Heart right ventricle (tissue), 16 donors: ENCODE measurements at regions of chr18 and their contacts with region 1.

Region 1: DNA sequence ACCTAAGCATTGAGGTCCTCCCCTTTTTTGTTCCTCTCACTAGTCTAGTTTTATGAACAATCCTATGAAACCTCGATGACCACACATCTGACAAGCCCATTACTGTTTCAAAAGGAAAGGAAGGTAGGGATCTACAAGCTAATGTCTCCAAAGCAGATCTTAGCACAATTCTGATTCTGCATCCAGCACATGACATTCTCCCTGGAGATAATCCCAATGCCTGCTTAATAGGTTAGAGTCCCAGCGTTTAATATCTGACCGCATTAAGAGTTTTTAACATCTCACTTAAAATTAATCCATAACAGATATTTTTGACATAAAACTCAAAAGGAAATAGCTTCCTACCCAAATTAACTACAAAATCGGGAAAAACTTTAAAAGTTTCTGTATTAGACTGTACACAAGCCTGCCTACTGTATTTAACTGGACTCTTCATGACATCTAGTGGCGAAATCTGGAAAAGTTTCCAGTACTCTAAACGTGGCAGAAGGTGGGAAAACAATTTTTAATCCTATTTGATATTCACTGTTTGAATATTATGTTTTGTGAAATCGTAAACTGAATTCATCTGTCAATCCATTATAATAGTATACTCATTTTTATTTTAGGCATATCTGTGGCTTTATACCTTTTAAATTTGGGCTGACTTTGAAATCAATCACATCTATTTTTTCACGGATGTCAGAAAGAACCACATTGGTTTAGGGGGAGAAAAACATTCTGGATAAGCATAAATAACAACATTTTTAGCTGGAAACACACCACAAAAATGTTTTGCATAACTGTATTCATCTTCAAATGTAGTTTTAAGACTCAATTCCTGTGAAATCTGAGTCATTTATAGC is 62.4 kb downstream of the TXNL1 start:
- DNase-seq: peak in 1 of 2 donors; percentile 56
- ATAC-seq: peak; percentile 64 to 96 (median 85)
- H3K4me3 ChIP-seq: peak overlapping the region in 2 of 10 donors; percentile 1 to 22
- H3K27ac ChIP-seq: peak overlapping the region; percentile 48 to 90 (median 70)
- H3K4me1 ChIP-seq: peaks cover 10 to 37% (median 33%) of the 10 kb centered on the region in 9 donors
- H3K27me3 ChIP-seq: no peaks in the 10 kb centered on the region
- CTCF ChIP-seq: peak; percentile 53 to 86 (median 71)

Region 2: GRCh38 chr18:55234366-55235093 is 1341.5 kb before region 1 on chr18:
- intact Hi-C with region 1: loop called in 8 of 10 experiments (anchors 2 to 10 kb)
- DNase-seq: peak; percentile 60 to 85
- ATAC-seq: peak; percentile 59 to 92 (median 86)
- H3K4me3 ChIP-seq: peak overlapping the region in 1 of 10 donors; percentile 3
- H3K27ac ChIP-seq: peak overlapping the region; percentile 39 to 89 (median 62)
- H3K4me1 ChIP-seq: peaks cover 3 to 63% (median 42%) of the 10 kb centered on the region in 9 donors
- H3K27me3 ChIP-seq: no peaks in the 10 kb centered on the region
- CTCF ChIP-seq: peak; percentile 59 to 84 (median 76)

Region 3: DNA sequence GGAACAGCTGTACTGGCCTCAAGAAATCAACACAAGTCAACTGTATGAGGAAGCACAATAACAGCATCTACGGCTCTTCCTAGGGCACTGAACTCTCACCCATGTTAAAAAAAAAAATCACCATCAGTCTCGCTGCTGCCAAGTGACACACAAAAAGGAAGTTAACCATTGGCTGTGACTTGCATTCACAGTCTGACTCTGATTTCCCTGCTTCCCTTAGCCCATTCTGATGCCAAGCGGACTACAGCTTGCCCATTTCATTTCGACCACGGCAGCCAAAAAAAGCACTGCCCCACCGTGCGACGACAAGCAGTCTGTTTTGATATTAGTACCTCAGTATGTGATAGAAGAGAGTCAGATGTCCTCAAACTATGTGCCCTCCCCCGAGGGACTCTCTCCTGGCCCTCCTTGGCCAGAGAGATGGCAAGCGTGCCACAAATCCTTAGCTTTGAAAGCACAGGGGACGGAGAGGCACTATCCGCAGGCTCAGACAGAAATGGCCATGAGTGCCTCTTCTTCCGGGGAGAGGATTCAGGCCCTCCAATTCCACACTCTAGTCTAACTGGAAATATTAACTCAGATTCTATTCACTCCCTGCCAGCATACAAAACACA is 1238.0 kb before region 1 on chr18:
- intact Hi-C with region 1: loop called in 3 of 10 experiments (anchors 5 to 10 kb)
- DNase-seq: peak; percentile 34 to 53
- ATAC-seq: peak; percentile 70 to 88 (median 80)
- H3K4me3 ChIP-seq: peak overlapping the region in 7 of 10 donors; percentile 9 to 39 (median 14)
- H3K27ac ChIP-seq: peak overlapping the region; percentile 18 to 91 (median 80)
- H3K4me1 ChIP-seq: peaks cover 2 to 76% (median 56%) of the 10 kb centered on the region in 9 donors
- H3K27me3 ChIP-seq: no peaks in the 10 kb centered on the region
- CTCF ChIP-seq: no peak

Region 4: GRCh38 chr18:55589625-55590291 is 986.3 kb before region 1 on chr18:
- intact Hi-C with region 1: loop called in 5 of 10 experiments (anchors 5 to 10 kb)
- DNase-seq: peak; percentile 97 to 98
- ATAC-seq: peak; percentile 95 to 99 (median 97)
- H3K4me3 ChIP-seq: peak overlapping the region; percentile 49 to 78 (median 73)
- H3K27ac ChIP-seq: peak overlapping the region; percentile 69 to 95 (median 87)
- H3K4me1 ChIP-seq: peaks cover 0 to 29% (median 12%) of the 10 kb centered on the region in 9 donors
- H3K27me3 ChIP-seq: no peaks in the 10 kb centered on the region
- CTCF ChIP-seq: peak in 2 of 9 donors; percentile 15 to 43

Region 5: GRCh38 chr18:55982992-55983391 is 593.0 kb before region 1 on chr18:
- intact Hi-C with region 1: loop called in 2 of 10 experiments (anchors 5 to 10 kb)
- DNase-seq: peak in 1 of 2 donors; percentile 6
- ATAC-seq: peak in 7 of 8 donors; percentile 32 to 72 (median 54)
- H3K4me3 ChIP-seq: peak overlapping the region in 2 of 10 donors; percentile 3 to 6
- H3K27ac ChIP-seq: peak overlapping the region; percentile 15 to 83 (median 68)
- H3K4me1 ChIP-seq: peaks cover 0 to 18% (median 9%) of the 10 kb centered on the region in 9 donors
- H3K27me3 ChIP-seq: no peaks in the 10 kb centered on the region
- CTCF ChIP-seq: no peak

Region 6: DNA sequence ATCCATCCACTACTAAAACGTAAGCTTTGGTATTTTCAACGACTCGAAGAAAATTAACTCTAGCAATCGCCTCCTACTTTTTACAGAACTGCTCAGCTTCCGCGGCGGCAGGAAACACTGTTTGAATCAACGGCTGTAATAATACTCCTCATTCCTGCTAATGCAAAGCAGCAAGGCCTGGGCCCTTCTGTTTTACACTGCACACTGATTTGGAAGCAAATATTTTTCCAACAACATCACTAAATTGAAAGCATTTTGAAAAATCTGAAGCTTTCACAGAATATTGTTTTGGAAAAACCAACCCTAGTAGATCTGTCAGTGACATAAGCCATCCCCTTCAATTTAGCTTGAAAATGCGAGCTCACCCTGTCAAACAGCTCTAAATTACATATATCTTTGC is 198.8 kb before region 1 on chr18:
- intact Hi-C with region 1: loop called in 1 of 10 experiments (anchors 5 kb)
- DNase-seq: no peak
- ATAC-seq: peak in 1 of 8 donors; percentile 46
- H3K4me3 ChIP-seq: peak overlapping the region in 1 of 10 donors; percentile 15
- H3K27ac ChIP-seq: peak overlapping the region in 5 of 10 donors; percentile 21 to 59 (median 34)
- H3K4me1 ChIP-seq: peaks cover 0 to 5% (median 2%) of the 10 kb centered on the region in 9 donors
- H3K27me3 ChIP-seq: no peaks in the 10 kb centered on the region
- CTCF ChIP-seq: no peak